Ovary (tissue), 10 donors: ENCODE measurements at regions of chr6 and their contacts with region 1.

Region 1: DNA sequence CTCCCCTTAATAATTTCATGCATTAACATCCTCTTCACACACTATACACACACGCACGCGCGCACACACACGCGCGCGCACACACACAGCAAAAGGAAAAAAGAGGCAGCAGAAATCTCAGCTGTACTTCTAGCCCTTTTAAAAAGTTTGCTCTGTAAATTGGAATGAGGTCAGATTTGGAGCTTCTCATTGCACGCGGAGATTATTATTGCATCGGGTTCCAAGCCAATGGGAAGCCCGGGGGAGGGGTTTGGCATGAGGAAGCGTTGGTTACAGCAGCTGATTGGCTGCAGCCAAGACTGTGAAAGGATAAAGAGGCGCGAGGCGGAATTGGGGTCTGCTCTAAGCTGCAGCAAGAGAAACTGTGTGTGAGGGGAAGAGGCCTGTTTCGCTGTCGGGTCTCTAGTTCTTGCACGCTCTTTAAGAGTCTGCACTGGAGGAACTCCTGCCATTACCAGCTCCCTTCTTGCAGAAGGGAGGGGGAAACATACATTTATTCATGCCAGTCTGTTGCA is at the start of gene SOX4:
- DNase-seq: peak; percentile 95 to 98 (median 97)
- H3K4me3 ChIP-seq: peak within 1 kb of the TSS; percentile 85
- H3K27ac ChIP-seq: peak within 1 kb of the TSS; percentile 83 to 87
- H3K4me1 ChIP-seq: no peaks in the 10 kb centered on the region
- H3K27me3 ChIP-seq: no peaks in the 10 kb centered on the region
- CTCF ChIP-seq: no peak
- EP300 ChIP-seq: no peak
- POLR2A ChIP-seq: peak; percentile 81
- total RNA-seq, gene SOX4: 34.4 to 78.3 (median 53.5) TPM

Region 2: DNA sequence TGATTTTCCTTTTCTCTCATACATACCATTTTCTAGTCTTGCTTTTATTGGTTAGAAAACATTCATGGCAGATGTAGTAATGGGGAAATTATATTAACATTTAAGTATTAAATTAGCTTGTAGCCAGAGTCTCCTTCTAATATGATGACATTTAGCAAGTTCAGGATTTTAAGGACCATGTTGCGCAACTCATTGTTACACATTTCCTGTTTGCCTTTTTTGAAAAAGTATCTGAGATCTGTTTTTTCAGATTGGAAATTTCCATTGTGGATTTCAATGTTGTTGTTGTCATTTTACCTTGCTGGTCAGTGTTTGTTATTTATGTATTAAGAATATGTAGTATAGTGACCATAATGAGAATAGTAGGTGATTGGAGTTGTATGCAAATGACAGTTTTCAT is 1020.5 kb before region 1 on chr6:
- intact Hi-C with region 1: loop called (anchors 5 to 10 kb)
- DNase-seq: no peak
- H3K4me3 ChIP-seq: no peak overlapping the region
- H3K27ac ChIP-seq: no peak overlapping the region
- H3K4me1 ChIP-seq: peaks cover 2% of the 10 kb centered on the region
- H3K27me3 ChIP-seq: no peaks in the 10 kb centered on the region
- CTCF ChIP-seq: no peak
- EP300 ChIP-seq: no peak
- POLR2A ChIP-seq: no peak

Region 3: DNA sequence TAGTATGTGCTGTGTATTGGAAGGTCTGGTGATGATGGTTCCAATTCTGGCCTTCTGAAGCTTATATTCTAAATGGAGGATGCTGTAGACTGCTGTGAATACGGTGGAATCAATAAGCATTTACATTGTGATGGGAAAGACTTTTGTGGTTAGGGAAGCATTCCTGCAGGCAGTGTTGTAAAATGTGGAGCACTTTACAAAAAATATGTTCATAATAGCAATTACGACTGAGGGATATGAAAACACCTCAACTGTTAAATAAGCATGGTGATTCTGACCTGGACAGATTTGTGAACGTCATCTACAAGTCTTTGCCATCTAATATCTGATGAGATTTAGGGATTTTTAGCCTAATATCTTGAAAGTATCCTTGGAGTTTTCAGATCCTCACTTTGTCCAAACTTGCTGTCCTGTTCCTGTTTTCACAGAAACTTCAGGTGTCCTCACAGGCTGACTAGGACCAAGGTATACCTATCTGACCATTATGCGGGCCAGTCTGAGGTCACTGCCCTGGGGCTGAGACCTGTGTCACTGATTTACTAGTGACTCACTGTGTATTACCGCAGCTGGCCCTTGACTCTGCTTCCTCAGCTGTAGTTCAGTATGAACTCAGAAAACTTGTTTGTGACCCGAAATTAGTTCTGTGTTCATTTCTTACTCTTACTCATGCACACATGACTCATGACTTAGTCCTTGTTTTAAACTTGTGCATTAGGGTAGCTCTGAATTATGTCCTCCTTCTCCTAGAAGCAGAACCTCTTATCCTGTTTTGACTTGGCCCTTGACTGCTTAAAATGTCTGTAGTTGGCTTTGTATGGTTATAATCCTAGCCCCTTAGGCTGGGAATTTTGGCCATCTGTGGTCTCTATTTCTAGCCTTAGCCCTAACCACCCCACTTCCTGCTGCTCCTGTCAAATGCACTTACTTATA is 716.2 kb before region 1 on chr6:
- intact Hi-C with region 1: loop called in 1 of 4 experiments (anchors 5 kb)
- DNase-seq: peak in 4 of 5 donors; percentile 27 to 53 (median 38)
- H3K4me3 ChIP-seq: no peak overlapping the region
- H3K27ac ChIP-seq: peak overlapping the region in 1 of 2 donors; percentile 5
- H3K4me1 ChIP-seq: peaks cover 4% of the 10 kb centered on the region
- H3K27me3 ChIP-seq: no peaks in the 10 kb centered on the region
- CTCF ChIP-seq: no peak
- EP300 ChIP-seq: no peak
- POLR2A ChIP-seq: no peak

Region 4: GRCh38 chr6:21348504-21349195 is 244.8 kb before region 1 on chr6:
- intact Hi-C with region 1: loop called in 1 of 4 experiments (anchors 10 kb)
- DNase-seq: peak in 3 of 5 donors; percentile 17 to 29 (median 25)
- H3K4me3 ChIP-seq: no peak overlapping the region
- H3K27ac ChIP-seq: peak overlapping the region in 1 of 2 donors; percentile 40
- H3K4me1 ChIP-seq: no peaks in the 10 kb centered on the region
- H3K27me3 ChIP-seq: no peaks in the 10 kb centered on the region
- CTCF ChIP-seq: no peak
- EP300 ChIP-seq: no peak
- POLR2A ChIP-seq: no peak

Region 5: DNA sequence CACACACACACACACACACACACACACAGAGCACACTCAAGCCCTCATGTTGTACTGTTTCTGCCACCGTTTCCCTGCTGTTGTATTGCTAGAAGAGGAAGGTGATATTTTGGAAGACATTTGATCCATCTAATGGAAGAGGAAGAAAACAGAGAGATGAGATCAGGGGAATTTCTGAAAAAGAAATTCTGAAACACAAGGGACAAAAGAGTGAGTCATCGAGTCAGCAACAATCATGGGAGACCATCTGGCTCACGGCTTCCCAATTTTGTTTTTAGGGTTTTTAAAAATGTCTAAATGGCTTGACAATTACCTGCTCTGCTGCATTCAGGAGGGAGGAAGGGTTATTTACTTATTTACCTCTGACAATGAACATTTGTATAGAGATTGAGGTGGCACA is 22.0 kb after region 1 on chr6:
- intact Hi-C with region 1: no loop called
- DNase-seq: no peak
- H3K4me3 ChIP-seq: no peak overlapping the region
- H3K27ac ChIP-seq: no peak overlapping the region
- H3K4me1 ChIP-seq: no peaks in the 10 kb centered on the region
- H3K27me3 ChIP-seq: no peaks in the 10 kb centered on the region
- CTCF ChIP-seq: no peak
- EP300 ChIP-seq: no peak
- POLR2A ChIP-seq: no peak

Region 6: GRCh38 chr6:21808045-21808470 is 214.6 kb after region 1 on chr6:
- intact Hi-C with region 1: loop called in 1 of 4 experiments (anchors 10 kb)
- DNase-seq: peak; percentile 47 to 53 (median 50)
- H3K4me3 ChIP-seq: no peak overlapping the region
- H3K27ac ChIP-seq: peak overlapping the region in 1 of 2 donors; percentile 62
- H3K4me1 ChIP-seq: peaks cover 13% of the 10 kb centered on the region
- H3K27me3 ChIP-seq: no peaks in the 10 kb centered on the region
- CTCF ChIP-seq: no peak
- EP300 ChIP-seq: no peak
- POLR2A ChIP-seq: no peak

Region 7: DNA sequence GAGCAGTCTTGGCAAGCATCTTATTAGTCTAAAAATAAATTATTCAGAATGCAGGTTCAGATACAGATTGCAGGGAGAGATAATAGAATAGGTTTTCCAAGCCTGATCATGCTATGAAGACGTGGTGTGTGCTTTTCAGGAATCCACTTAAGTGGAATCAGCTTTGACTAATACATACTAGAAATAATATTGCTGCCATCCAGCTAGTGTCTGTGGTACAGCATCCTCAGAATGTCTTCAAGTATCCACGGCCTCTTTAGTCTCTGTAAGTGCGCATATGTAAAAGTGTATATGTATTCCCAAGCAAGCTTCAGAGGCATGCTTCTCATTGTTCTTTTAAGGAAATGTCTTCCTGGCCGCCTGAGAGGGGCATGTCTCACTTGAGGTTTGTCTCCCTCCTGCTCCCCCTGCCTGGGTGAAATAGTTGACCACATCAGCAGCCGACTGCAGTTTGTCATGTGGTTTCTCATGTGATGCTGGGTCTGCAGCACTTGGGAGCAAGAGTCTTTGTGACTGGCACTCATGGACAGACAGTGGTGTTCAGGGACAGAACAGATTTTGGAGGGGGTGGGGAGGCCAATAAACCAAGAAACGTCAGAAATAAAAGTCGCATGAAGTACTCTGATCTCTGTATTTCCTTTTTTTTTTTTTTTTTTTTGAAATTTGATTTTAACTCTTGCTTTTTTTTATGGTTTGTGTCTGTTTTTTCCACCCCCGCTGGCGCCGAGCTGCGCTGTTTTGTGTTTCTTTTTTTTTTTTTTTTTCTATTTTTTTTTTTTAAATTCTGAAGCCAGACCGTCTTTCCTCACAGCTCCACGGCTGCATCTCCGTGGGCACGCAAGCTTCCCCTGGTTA is 552.6 kb after region 1 on chr6:
- intact Hi-C with region 1: loop called in 3 of 4 experiments (anchors 10 kb)
- DNase-seq: peak in 1 of 5 donors; percentile 26
- H3K4me3 ChIP-seq: no peak overlapping the region
- H3K27ac ChIP-seq: no peak overlapping the region
- H3K4me1 ChIP-seq: peaks cover 5% of the 10 kb centered on the region
- H3K27me3 ChIP-seq: no peaks in the 10 kb centered on the region
- CTCF ChIP-seq: peak in 1 of 3 donors; percentile 15
- EP300 ChIP-seq: no peak
- POLR2A ChIP-seq: no peak

Region 8: DNA sequence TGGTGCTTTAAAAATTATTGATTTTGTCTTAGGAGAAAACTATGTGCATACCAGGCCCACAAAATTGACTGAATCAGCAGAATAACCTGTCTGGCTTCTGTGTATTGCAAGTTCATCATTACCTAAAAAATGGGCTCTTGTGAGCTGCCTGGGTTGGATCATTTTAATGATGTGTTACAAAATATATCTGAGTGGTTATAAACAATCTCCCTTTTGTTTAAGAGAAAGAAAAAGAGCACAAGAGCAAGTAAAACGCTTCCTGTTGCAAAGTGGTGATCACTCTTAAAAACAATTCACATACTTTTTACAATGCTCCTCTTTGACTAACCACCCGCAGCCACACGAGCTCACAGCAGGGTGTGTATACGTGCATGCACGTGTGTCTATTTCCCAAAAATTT is 1311.0 kb after region 1 on chr6:
- intact Hi-C with region 1: loop called in 1 of 4 experiments (anchors 5 kb)
- DNase-seq: no peak
- H3K4me3 ChIP-seq: no peak overlapping the region
- H3K27ac ChIP-seq: no peak overlapping the region
- H3K4me1 ChIP-seq: no peaks in the 10 kb centered on the region
- H3K27me3 ChIP-seq: no peaks in the 10 kb centered on the region
- CTCF ChIP-seq: no peak
- EP300 ChIP-seq: no peak
- POLR2A ChIP-seq: no peak